ENCODE measurements at regions of chr2 and their contacts with region 1.

Region 1: GRCh38 chr2:27754138-27754588 is 17.4 kb upstream of the MRPL33 start:
- DNase-seq: peak; percentile 86
- ATAC-seq: peak; percentile 98
- H3K4me3 Mint-ChIP-seq: no peak overlapping the region
- H3K27ac Mint-ChIP-seq: no peak overlapping the region
- H3K4me1 Mint-ChIP-seq: no peaks in the 10 kb centered on the region
- H3K27me3 Mint-ChIP-seq: peaks cover 5% of the 10 kb centered on the region
- CTCF ChIP-seq: peak; percentile 98

Region 2: GRCh38 chr2:27765621-27766269 is 11.6 kb after region 1 on chr2:
- CTCF ChIA-PET with region 1: interaction called, 10 read pairs
- POLR2A ChIA-PET with region 1: no interaction called
- intact Hi-C with region 1: no loop called
- DNase-seq: peak; percentile 46
- ATAC-seq: peak; percentile 45
- H3K4me3 Mint-ChIP-seq: peak overlapping the region; percentile 29
- H3K27ac Mint-ChIP-seq: peak overlapping the region; percentile 63
- H3K4me1 Mint-ChIP-seq: peaks cover 10% of the 10 kb centered on the region
- H3K27me3 Mint-ChIP-seq: peaks cover 2% of the 10 kb centered on the region
- CTCF ChIP-seq: no peak

Region 3: DNA sequence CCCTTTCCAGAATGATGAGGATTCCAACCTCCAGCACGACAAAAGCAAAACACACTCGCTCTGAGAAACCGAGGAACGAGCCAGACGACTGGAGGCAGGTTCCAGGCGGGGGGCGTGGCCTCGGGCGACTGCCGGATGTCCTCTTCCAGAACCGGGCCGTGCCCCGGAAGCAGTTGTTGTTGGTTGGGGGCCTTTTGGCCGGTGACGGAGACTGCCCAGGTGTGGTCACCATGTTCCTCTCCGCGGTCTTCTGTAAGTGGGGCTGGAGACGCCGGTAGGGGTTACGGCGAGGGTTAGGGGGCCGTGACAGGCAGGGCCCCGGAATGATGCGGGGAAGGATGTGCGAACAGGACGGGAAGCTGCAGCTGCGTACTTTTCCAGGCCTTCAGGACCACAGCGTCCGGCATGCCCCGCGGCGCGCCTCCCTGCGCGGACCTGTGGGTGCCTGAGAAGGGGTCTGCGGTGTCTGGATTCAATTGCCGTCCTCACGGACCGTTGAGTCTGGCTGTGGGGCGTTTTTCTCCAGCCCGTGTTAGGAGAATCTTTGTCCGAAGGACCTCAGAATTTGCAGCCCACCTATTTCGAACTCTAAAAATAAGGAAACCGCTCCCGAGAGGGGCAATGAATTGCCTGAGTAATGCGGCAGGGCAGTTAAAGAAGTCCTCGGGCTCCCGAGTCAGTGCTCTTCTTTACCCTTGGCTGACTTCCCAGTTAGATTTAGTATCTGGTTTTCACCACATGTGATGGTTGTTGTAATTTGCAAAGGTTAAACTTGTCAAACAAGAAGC is 17.6 kb after region 1 on chr2 and contains the start of gene MRPL33:
- CTCF ChIA-PET with region 1: interaction called, 10 read pairs
- POLR2A ChIA-PET with region 1: no interaction called
- intact Hi-C with region 1: no loop called
- DNase-seq: peak; percentile 96
- ATAC-seq: peak; percentile 98
- H3K4me3 Mint-ChIP-seq: peak within 1 kb of the TSS; percentile 95
- H3K27ac Mint-ChIP-seq: peak within 1 kb of the TSS; percentile 98
- H3K4me1 Mint-ChIP-seq: peaks cover 36% of the 10 kb centered on the region
- H3K27me3 Mint-ChIP-seq: no peaks in the 10 kb centered on the region
- CTCF ChIP-seq: no peak
- total RNA-seq, gene MRPL33: 54.6 to 59.2 TPM

Region 4: DNA sequence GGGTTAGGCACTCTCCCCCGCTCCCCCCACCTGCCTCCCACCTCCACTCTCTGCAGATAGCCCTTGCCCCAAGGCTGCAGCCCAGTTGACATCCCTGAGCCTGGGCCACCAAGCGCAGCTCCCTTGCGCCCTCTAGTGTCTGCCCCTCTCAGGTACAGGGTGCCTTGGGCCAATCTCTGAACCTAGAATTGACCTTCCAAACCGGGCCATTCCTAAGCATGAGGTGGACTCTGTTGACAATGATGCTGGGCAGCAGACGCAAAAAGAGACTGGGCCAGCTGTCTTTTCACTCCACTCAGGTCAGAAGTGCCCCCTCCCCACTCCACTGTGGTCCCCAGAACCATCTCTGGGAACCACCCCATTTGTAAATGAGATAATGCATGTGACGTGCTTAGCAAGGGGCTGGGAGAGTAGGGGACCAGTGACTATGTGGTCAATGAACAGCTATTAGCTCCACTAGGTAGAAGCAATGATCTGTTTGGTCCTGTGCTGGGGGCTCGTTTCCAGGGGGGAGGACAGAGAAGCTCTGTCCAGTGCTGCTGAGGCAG is 698.4 kb after region 1 on chr2:
- CTCF ChIA-PET with region 1: interaction called, 7 read pairs
- POLR2A ChIA-PET with region 1: no interaction called
- intact Hi-C with region 1: loop called (anchors 10 kb)
- DNase-seq: peak; percentile 91
- ATAC-seq: peak; percentile 72
- H3K4me3 Mint-ChIP-seq: no peak overlapping the region
- H3K27ac Mint-ChIP-seq: no peak overlapping the region
- H3K4me1 Mint-ChIP-seq: peaks cover 41% of the 10 kb centered on the region
- H3K27me3 Mint-ChIP-seq: no peaks in the 10 kb centered on the region
- CTCF ChIP-seq: peak; percentile 96

Measured in activated CD8-positive, alpha-beta T cell treated with anti-CD3 and anti-CD28 coated beads for 36 hours (primary cell).